ENCODE measurements at regions of chr10 and their contacts with region 1.

Region 1: DNA sequence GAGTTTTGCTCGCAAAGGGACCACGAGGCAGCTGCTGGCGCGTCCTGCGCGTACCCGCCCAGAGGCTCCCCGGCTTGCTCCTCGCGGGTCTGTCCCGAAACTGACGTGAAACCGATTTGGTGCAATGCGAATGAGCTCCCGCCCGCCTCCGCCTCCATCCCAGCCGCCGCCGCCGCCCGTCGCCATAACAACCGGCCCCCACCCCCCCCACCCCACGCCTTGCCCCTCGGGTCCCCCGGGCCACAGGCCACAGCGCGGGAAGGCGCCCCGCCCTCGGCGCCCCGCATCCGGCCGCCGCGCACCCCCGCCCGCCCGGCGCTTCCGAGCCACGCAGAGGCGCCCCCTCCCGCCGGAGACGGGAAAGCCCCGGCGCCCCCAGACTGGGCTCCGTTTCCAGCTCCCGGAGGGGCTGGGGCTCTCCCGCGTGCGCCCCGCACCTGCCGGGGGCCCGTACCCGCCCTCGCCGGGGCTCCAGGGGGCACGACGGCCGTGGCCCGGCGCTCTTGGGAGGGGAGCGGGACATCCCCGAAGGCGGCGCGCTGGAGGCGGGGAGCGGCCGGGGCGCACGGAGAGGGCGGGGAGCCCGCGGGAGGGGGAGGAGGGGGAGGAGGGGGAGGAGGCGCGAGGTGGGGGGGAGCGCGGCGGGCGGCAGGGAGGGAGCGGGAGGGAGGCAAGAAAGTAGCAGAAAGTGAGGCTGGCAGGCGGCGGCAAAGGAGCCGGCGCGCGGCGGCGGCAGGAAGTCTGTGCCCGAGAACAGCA is at the start of gene CAMK1D:
- DNase-seq: peak; percentile 86
- H3K4me3 Mint-ChIP-seq: peak within 1 kb of the TSS; percentile 95
- H3K27ac Mint-ChIP-seq: peak within 1 kb of the TSS; percentile 91
- H3K4me1 Mint-ChIP-seq: peaks cover 35% of the 10 kb centered on the region
- H3K27me3 Mint-ChIP-seq: peaks cover 4% of the 10 kb centered on the region
- total RNA-seq, gene CAMK1D: 9.5 to 11.3 TPM

Region 2: GRCh38 chr10:12195603-12196506 is 153.2 kb before region 1 on chr10 and contains the starts of genes CDC123 and NUDT5:
- CTCF ChIA-PET with region 1: no interaction called
- intact Hi-C with region 1: loop called (anchors 1 kb)
- DNase-seq: peak; percentile 93
- H3K4me3 Mint-ChIP-seq: peak within 1 kb of the TSS; percentile 96
- H3K27ac Mint-ChIP-seq: peak within 1 kb of the TSS; percentile 98
- H3K4me1 Mint-ChIP-seq: peaks cover 58% of the 10 kb centered on the region
- H3K27me3 Mint-ChIP-seq: no peaks in the 10 kb centered on the region
- total RNA-seq, gene CDC123: 108 to 117 TPM
- total RNA-seq, gene NUDT5: 97.1 to 100 TPM

Region 3: GRCh38 chr10:12369982-12370381 is 20.9 kb after region 1 on chr10:
- CTCF ChIA-PET with region 1: interaction called, 6 read pairs
- intact Hi-C with region 1: loop called (anchors 1 kb)
- DNase-seq: no peak
- H3K4me3 Mint-ChIP-seq: no peak overlapping the region
- H3K27ac Mint-ChIP-seq: no peak overlapping the region
- H3K4me1 Mint-ChIP-seq: peaks cover 26% of the 10 kb centered on the region
- H3K27me3 Mint-ChIP-seq: no peaks in the 10 kb centered on the region

Region 4: DNA sequence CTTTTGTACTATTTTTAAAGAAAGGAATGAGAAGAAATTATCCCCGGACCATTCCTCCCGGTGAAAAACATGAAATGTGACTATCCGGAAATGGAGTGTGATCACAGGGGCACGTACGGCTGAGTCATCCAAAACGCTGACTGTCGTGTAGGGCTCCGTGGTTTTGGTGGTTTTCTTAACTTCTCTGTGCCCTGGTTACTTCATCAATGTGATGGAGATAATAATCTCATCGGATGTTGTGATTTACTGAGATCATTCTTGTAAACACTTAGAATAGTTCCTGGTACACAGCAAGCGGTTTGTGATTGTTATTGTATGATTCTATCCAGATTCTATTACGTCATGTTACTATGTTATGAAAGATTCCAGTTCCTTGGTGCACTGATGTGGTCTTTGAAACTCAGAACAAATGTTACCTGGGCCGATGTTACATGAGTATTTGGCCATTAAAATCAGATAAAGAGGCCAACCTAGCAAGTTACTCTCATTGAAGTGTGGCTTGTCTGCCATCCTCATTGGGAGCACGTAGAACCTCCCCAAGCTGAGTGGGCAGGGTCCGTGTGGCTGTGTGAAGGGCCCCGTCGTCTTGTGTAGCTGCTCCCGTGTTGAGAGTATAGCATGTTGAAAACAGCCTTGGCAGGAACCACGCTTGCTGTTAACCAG is 99.8 kb after region 1 on chr10:
- CTCF ChIA-PET with region 1: no interaction called
- intact Hi-C with region 1: loop called (anchors 1 kb)
- DNase-seq: peak; percentile 86
- H3K4me3 Mint-ChIP-seq: peak overlapping the region; percentile 62
- H3K27ac Mint-ChIP-seq: peak overlapping the region; percentile 52
- H3K4me1 Mint-ChIP-seq: peaks cover 40% of the 10 kb centered on the region
- H3K27me3 Mint-ChIP-seq: no peaks in the 10 kb centered on the region

Region 5: DNA sequence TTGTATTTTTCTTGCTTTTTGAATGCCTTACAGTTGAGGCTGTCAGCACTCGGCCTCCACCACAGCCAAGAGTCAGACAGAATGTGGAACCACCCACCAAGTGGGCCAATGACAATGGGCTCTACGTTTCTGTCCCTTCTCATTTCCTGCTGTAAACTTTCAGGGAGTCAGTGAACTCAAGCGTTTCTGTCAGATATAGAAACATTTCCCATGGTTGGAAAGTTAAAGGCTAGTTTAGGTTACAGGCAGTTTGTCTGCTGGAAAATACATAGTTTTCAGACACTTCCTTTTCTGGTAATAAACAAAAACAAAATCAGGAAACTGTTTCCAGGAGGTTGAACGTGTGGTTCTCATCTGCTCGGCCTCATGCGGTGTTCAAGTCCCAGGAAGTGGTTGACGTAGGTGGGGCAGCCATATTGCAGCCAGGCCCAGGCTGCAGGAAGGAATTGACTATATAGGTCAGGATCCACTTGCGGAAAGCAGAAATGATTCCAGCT is 245.4 kb after region 1 on chr10:
- CTCF ChIA-PET with region 1: no interaction called
- intact Hi-C with region 1: loop called (anchors 5 kb)
- DNase-seq: peak; percentile 67
- H3K4me3 Mint-ChIP-seq: peak overlapping the region; percentile 30
- H3K27ac Mint-ChIP-seq: peak overlapping the region; percentile 83
- H3K4me1 Mint-ChIP-seq: peaks cover 76% of the 10 kb centered on the region
- H3K27me3 Mint-ChIP-seq: no peaks in the 10 kb centered on the region

Region 6: DNA sequence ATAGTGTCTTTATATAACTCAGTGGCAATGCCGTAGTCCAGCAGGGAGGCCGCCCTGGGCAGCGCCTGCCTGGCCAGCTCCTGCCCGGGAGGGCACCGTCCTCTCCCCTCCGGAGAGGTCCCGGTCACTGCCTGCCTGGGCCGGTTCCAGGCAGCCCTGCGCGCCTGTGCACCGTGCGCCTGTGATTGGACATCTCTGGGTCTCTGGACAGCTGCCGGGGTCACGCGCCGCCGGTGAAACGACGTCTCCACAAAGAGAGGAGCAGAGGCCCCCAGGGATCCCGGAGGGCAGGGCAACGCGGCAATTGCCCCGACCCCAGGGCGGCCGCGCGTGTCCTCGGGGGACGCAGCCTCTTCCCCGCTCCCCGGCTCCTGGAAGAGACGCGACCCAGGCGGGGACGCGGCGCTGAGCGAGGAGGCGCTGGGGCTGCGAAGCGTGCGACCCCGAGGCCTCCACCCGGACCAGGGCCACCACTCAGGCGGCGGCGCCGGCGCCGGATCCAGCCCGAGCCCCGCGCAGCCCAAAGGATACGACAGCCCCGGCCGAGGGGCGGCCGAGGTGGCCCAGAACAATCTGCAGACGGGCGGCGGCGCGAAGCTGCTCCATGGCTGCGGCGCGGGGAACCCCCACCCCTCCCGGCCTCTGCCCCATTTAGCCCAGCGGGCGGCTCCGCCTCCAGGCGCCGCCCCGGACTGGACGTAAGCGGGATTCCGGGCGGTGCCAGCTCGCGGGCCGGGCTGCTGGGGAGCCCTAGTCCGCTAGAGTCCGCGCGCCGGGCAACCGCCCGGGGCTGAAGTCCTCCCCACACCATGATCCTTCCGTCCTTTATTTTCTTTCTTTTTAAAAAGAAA is 950.6 kb after region 1 on chr10 and contains the start of gene PHYH:
- CTCF ChIA-PET with region 1: no interaction called
- intact Hi-C with region 1: loop called (anchors 5 kb)
- DNase-seq: peak; percentile 78
- H3K4me3 Mint-ChIP-seq: peak within 1 kb of the TSS; percentile 76
- H3K27ac Mint-ChIP-seq: peak within 1 kb of the TSS; percentile 83
- H3K4me1 Mint-ChIP-seq: peaks cover 24% of the 10 kb centered on the region
- H3K27me3 Mint-ChIP-seq: no peaks in the 10 kb centered on the region
- total RNA-seq, gene PHYH: 13.3 to 14.2 TPM